ENCODE measurements at regions of chr3 and their contacts with region 1.

Region 1: GRCh38 chr3:114498779-114499370 is 205.0 kb downstream of the TIGIT start:
- DNase-seq: peak; percentile 84 to 85
- H3K4me3 ChIP-seq: 0 out of 2 replicates have a peak overlapping the region, but pooled peaks have one; percentile 18
- H3K27ac ChIP-seq: peak overlapping the region; percentile 63
- H3K4me1 ChIP-seq: peaks cover 52% of the 10 kb centered on the region
- H3K27me3 ChIP-seq: no peaks in the 10 kb centered on the region
- CTCF ChIP-seq: no peak

Region 2: DNA sequence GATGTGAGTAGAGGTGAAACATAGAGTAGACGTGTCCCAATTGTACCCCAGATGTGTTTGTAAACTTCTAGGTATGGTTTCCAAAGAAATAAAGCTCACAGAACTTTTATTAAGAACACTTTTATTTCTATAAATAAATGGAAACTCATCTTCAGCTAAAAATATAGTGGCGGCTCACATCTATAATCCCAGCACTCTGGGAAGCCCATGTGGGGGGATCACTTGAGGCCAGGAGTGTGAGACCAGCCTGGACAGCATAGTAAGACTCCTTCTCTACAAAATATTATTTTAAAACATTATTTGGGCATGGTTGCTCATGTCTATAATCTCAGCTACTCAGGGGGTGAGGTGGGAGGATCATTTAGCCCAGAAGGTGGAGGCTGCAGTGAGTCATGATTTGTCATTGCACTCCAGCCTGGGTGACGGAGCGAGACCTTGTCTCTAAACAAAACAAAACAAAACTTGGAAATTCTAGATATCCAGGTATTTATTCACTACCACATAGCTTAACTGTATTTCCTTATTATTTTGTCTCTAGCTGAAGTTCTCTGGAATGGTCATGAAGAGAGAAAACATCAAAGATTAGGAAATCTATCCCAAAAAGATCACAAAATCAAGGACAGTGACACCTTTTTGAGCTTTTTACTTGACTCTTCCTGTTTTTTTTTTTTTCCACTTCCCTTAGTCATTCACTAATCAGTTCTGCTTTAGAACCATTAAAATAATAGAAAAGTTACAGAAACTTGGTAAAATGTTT is 53.1 kb after region 1 on chr3:
- CTCF ChIA-PET with region 1: interaction called, 3 read pairs
- POLR2A ChIA-PET with region 1: interaction called, 10 read pairs
- intact Hi-C with region 1: loop called (anchors 2 kb)
- DNase-seq: peak; percentile 68 to 75
- H3K4me3 ChIP-seq: 0 out of 2 replicates have a peak overlapping the region, but pooled peaks have one; percentile 10
- H3K27ac ChIP-seq: peak overlapping the region; percentile 75
- H3K4me1 ChIP-seq: peaks cover 13% of the 10 kb centered on the region
- H3K27me3 ChIP-seq: no peaks in the 10 kb centered on the region
- CTCF ChIP-seq: no peak

Region 3: GRCh38 chr3:114624571-114625181 is 125.8 kb after region 1 on chr3:
- CTCF ChIA-PET with region 1: no interaction called
- POLR2A ChIA-PET with region 1: interaction called, 3 read pairs
- intact Hi-C with region 1: loop called (anchors 2 kb)
- DNase-seq: peak; percentile 81 to 91
- H3K4me3 ChIP-seq: peak overlapping the region; percentile 75
- H3K27ac ChIP-seq: peak overlapping the region; percentile 90
- H3K4me1 ChIP-seq: peaks cover 35% of the 10 kb centered on the region
- H3K27me3 ChIP-seq: no peaks in the 10 kb centered on the region
- CTCF ChIP-seq: no peak